PC-3 (cell line): ENCODE measurements at regions of chr10 and their contacts with region 1.

Region 1: DNA sequence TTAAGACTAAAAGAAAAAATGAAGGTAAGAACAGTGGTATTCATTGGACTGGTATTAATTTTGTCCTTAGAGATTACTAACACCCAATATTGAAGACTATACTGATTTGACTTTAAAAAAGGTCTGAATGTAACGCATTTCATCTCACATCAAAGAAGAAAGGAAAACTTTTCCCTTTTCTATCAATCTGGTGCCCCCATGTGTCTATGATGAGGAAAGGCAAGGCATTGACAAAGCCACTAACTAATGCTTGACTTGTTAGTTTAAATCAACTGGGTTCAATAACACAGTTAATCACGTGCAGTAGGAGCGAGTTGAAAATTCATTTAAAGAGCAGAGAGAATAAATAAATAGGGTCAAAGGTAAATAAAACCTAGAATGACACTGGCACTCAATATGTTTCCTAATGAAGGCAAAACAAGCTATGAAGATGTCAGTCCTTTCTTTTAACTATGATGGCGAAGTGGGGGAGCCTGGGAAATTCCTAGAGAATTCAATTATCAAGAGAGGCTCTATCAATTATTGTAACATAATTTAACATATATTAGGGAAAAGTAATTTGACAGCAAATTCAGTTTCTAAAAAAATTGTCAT is 180.9 kb downstream of the ANK3 start:
- DNase-seq: peak; percentile 87
- ATAC-seq: peak; percentile 57
- H3K4me3 ChIP-seq: no peak overlapping the region
- H3K27ac ChIP-seq: no peak overlapping the region
- H3K4me1 ChIP-seq: peaks cover 22% of the 10 kb centered on the region
- H3K27me3 ChIP-seq: no peaks in the 10 kb centered on the region
- CTCF ChIP-seq: peak; percentile 100

Region 2: DNA sequence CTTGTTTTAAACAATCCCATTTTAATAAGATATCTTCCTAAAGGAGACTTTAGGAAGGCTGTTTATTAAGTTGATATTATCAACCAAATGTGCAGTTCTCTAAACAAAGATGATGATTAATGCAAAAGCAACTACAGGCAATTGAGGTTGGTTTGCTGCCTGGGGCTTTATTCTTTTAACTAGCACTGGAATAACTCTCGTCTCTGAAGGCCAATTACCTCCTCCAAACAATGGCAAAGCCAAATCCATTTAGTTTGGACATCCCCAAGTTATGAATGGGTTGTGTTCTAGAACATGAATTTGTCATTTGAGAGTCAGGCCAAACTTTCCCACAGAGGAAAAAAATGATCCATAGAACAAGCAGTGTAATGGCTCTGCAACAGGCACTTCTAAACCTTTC is 613.2 kb before region 1 on chr10:
- CTCF ChIA-PET with region 1: no interaction called
- POLR2A ChIA-PET with region 1: no interaction called
- intact Hi-C with region 1: no loop called
- DNase-seq: peak; percentile 80
- ATAC-seq: peak; percentile 74
- H3K4me3 ChIP-seq: no peak overlapping the region
- H3K27ac ChIP-seq: peak overlapping the region; percentile 77
- H3K4me1 ChIP-seq: peaks cover 14% of the 10 kb centered on the region
- H3K27me3 ChIP-seq: no peaks in the 10 kb centered on the region
- CTCF ChIP-seq: no peak

Region 3: DNA sequence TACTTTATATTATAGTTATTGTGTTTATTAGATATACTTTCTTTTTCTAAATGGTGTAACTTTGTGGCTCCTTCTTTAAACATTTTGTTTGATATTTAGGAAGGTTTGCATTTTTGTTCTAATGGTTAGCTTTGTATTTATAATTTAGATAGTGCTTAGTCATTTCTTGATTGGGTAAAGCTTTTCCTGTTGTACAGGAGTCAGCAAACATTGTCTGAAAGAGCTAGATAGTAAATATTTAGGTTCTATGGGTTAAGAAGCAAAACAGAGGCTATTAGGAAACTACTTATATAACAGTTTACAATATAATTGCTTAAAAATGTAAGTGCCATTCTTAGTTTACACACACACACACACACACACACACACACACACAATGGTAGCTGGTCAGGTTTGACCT is 231.9 kb before region 1 on chr10:
- CTCF ChIA-PET with region 1: no interaction called
- POLR2A ChIA-PET with region 1: no interaction called
- intact Hi-C with region 1: no loop called
- DNase-seq: peak; percentile 65
- ATAC-seq: peak; percentile 72
- H3K4me3 ChIP-seq: no peak overlapping the region
- H3K27ac ChIP-seq: no peak overlapping the region
- H3K4me1 ChIP-seq: peaks cover 9% of the 10 kb centered on the region
- H3K27me3 ChIP-seq: no peaks in the 10 kb centered on the region
- CTCF ChIP-seq: no peak

Region 4: DNA sequence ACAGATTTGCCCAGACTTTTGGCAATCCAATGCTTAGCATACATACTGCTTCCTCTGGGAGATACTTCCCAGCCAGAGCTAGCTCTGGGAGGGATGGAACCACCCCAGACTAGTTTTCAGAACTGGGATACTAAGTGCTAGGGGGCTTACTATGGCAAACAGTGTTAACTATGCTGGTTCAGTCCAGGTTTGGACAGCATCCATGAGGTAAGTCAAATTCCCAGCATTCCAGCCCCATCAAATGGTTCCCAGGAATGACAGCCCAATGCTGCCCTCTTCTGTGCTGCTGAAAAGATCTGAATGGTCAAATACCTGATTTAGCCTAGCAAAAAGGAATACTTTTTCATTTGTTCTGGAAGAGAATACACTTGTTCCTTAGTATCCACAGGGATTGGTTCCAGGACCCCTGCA is 160.7 kb before region 1 on chr10:
- CTCF ChIA-PET with region 1: no interaction called
- POLR2A ChIA-PET with region 1: no interaction called
- intact Hi-C with region 1: loop called (anchors 5 kb)
- DNase-seq: peak; percentile 87
- ATAC-seq: peak; percentile 82
- H3K4me3 ChIP-seq: no peak overlapping the region
- H3K27ac ChIP-seq: no peak overlapping the region
- H3K4me1 ChIP-seq: peaks cover 15% of the 10 kb centered on the region
- H3K27me3 ChIP-seq: no peaks in the 10 kb centered on the region
- CTCF ChIP-seq: peak; percentile 90

Region 5: GRCh38 chr10:60114765-60115586 is 93.8 kb before region 1 on chr10:
- CTCF ChIA-PET with region 1: interaction called, 25 read pairs
- POLR2A ChIA-PET with region 1: interaction called, 3 read pairs
- intact Hi-C with region 1: loop called (anchors 1 kb)
- DNase-seq: peak; percentile 96
- ATAC-seq: peak; percentile 92
- H3K4me3 ChIP-seq: no peak overlapping the region
- H3K27ac ChIP-seq: no peak overlapping the region
- H3K4me1 ChIP-seq: peaks cover 7% of the 10 kb centered on the region
- H3K27me3 ChIP-seq: no peaks in the 10 kb centered on the region
- CTCF ChIP-seq: peak; percentile 99

Region 6: DNA sequence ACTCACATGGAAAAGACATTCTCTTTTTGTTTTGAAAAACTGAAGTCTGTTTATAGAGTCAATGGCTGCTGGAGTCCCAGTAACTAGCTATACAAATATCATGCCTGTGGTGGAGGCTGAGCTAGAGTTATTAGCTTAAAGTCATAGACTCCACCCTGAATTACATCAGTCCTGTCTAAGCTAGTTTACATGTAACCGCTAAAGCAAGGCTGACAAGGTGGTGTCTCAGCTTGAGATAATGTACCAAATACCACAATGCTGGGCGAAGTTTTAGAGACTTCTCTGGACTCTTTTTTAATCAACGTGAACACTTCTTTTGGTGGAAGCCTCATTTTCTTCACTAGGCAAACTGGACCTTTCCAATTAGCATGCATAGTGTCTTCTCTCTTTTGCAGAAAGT is 38.5 kb before region 1 on chr10:
- CTCF ChIA-PET with region 1: interaction called, 4 read pairs
- POLR2A ChIA-PET with region 1: interaction called, 4 read pairs
- intact Hi-C with region 1: loop called (anchors 2 kb)
- DNase-seq: peak; percentile 97
- ATAC-seq: peak; percentile 72
- H3K4me3 ChIP-seq: peak overlapping the region; percentile 55
- H3K27ac ChIP-seq: peak overlapping the region; percentile 95
- H3K4me1 ChIP-seq: peaks cover 71% of the 10 kb centered on the region
- H3K27me3 ChIP-seq: no peaks in the 10 kb centered on the region
- CTCF ChIP-seq: no peak